Common myeloid progenitor, CD34-positive (primary cell): ENCODE measurements at regions of chr10 and their contacts with region 1.

Region 1: DNA sequence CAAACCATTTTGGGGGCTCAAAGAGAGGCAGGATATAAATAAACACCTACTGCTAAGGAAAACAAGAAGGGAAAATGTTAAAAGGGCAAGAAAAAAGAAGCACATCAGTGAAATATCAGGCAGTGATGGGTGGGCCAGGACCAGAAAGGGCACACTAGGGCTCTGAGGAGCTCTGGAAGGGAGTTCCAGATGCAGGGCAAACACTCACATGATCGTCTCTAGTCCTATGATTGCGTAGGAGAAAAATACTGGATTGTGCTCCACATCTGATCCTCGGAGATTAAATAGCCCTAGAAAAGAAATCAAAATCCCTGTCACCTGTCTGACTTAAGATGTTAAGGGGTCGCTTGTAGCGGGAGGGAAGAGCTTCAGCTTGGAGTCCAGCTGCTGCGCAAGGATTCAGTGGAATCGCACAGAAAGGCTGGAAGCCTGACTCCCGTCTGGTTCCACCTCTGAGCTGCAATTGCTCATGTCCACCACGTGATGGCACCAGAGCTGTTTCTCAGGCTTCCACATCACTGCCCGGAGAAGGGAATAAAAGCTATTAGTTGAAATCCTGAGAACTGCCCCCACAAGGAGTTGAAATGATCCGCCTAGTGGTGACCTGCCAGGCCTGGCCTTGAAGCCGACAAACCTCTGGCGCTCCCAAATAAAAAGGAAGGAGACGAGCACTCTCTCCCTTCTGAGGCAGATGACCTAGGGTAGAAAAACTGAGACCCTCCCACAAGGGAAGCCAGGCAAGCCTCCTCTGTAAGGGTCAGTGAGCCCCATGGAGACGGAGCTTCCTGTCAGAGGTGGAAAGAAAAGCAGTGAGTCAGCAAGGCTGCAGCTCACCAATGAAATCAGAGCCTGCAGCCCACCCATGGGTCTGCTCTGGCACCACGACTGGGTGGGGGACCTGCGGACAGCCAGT is 39.2 kb downstream of the XPNPEP1 start:
- DNase-seq: peak; percentile 84 to 89 (median 88)
- H3K4me3 ChIP-seq: no peak overlapping the region
- H3K27ac ChIP-seq: no peak overlapping the region
- H3K4me1 ChIP-seq: peaks cover 3 to 5% (median 4%) of the 10 kb centered on the region in 4 experiments
- H3K27me3 ChIP-seq: no peaks in the 10 kb centered on the region

Region 2: DNA sequence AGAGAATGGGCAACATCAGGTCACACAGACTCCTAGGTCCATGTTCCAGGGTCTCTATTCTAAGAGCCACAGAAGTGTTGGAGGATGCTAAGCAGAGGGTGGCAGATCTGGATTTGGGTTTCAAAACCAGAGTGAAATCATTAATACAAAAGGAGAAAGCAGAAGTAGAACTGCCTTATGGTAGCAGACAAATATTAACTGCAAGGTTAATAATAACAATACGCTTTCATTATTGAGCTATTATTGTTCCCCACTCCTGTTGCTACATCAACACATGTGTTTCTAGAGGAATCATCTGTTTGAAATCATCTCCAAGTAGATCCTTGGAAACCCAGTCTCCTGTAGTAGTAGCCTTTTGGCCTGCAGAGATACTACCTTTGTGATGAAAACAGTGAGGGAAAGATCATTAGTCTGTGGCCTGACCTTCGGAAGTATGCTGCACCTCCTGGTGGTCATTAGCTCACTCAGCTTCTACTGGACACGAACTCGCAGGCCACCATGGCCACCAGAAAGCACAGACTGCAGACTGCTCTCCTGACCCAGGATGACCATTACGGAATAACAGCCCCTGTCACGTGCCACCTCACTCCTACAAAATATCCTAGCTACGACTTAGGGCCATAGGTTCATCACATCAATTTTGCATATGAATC is 45.4 kb before region 1 on chr10:
- CTCF ChIA-PET with region 1: no interaction called
- POLR2A ChIA-PET with region 1: no interaction called
- DNase-seq: no peak
- H3K4me3 ChIP-seq: no peak overlapping the region
- H3K27ac ChIP-seq: no peak overlapping the region
- H3K4me1 ChIP-seq: no peaks in the 10 kb centered on the region
- H3K27me3 ChIP-seq: peaks cover 0 to 7% (median 4%) of the 10 kb centered on the region in 5 experiments

Region 3: DNA sequence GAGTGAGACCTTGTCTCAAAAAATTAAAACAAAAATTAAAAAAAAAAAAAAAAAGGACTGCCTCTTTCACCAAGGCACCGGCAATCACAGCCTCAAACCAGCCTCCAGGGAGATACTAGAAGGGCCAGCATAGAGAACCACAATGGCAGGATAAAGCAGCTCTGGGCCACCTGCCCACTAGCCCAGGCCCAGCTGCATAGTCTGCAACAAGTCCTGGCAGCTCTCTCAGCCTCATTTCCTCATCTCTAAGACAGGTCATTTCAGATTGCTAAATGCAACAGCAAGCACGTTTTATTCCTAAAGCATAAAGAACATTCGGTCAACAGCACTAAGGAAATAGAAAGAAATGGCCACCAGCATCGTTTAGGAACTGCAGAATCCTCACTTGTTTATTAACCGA is 10.4 kb after region 1 on chr10:
- CTCF ChIA-PET with region 1: interaction called, 52 read pairs
- POLR2A ChIA-PET with region 1: no interaction called
- DNase-seq: no peak
- H3K4me3 ChIP-seq: no peak overlapping the region
- H3K27ac ChIP-seq: no peak overlapping the region
- H3K4me1 ChIP-seq: peaks cover 0 to 26% (median 20%) of the 10 kb centered on the region in 4 experiments
- H3K27me3 ChIP-seq: no peaks in the 10 kb centered on the region

Region 4: GRCh38 chr10:109911903-109912302 is 27.8 kb after region 1 on chr10:
- CTCF ChIA-PET with region 1: interaction called, 14 read pairs
- POLR2A ChIA-PET with region 1: no interaction called
- DNase-seq: no peak
- H3K4me3 ChIP-seq: no peak overlapping the region
- H3K27ac ChIP-seq: no peak overlapping the region
- H3K4me1 ChIP-seq: peaks cover 0 to 31% (median 13%) of the 10 kb centered on the region in 4 experiments
- H3K27me3 ChIP-seq: no peaks in the 10 kb centered on the region

Region 5: GRCh38 chr10:109947111-109947920 is 63.2 kb after region 1 on chr10:
- CTCF ChIA-PET with region 1: no interaction called
- POLR2A ChIA-PET with region 1: no interaction called
- DNase-seq: peak in 2 of 3 donors; percentile 8 to 23
- H3K4me3 ChIP-seq: no peak overlapping the region
- H3K27ac ChIP-seq: no peak overlapping the region
- H3K4me1 ChIP-seq: no peaks in the 10 kb centered on the region
- H3K27me3 ChIP-seq: no peaks in the 10 kb centered on the region

Region 6: DNA sequence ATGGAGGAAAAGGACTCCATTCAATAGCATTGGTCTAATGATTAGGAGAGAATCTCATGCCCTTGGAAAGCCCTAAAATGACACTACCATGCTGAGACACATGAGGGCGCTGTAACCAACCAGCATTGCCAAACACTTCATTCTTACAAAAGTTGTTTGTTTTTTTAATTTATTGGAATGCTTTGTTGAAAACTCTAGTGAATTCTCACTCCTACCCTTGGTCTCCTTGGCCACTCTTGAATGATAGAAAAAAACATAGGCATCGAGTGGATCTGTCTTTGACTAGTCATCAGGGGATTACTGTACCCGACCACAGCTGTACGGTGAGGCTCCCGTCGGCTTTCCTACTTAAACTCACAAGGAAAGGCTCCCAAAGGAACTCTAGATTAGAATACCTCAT is 94.4 kb after region 1 on chr10:
- CTCF ChIA-PET with region 1: interaction called, 12 read pairs
- POLR2A ChIA-PET with region 1: no interaction called
- DNase-seq: peak; percentile 52 to 71 (median 59)
- H3K4me3 ChIP-seq: no peak overlapping the region
- H3K27ac ChIP-seq: peak overlapping the region in 1 of 2 experiments; percentile 6
- H3K4me1 ChIP-seq: no peaks in the 10 kb centered on the region
- H3K27me3 ChIP-seq: no peaks in the 10 kb centered on the region

Region 7: DNA sequence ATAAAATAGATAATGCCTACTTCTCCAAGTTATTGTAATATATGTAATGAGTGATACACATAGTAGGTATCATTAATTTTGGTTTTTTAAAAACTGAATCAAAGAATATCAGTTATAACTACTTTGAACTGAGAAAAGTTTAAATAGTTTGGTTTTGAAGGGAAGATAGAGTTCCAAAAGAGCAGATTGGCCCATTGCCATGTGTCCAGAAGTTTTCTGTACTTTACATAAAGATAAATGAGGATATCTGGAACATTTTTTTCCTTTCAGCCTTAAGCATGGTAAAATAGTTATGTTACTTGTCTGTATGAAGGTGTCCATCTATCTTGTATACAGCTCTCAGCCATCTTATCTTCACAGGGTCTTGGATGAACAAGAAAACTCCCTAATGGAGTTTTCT is 225.4 kb after region 1 on chr10:
- CTCF ChIA-PET with region 1: interaction called, 10 read pairs
- POLR2A ChIA-PET with region 1: no interaction called
- DNase-seq: no peak
- H3K4me3 ChIP-seq: no peak overlapping the region
- H3K27ac ChIP-seq: no peak overlapping the region
- H3K4me1 ChIP-seq: no peaks in the 10 kb centered on the region
- H3K27me3 ChIP-seq: no peaks in the 10 kb centered on the region